Activated CD8-positive, alpha-beta T cell treated with anti-CD3 and anti-CD28 coated beads for 36 hours (primary cell): ENCODE measurements at regions of chr2 and their contacts with region 1.

Region 1: GRCh38 chr2:25606892-25607291 is 66.5 kb downstream of the DTNB start:
- DNase-seq: peak; percentile 15
- ATAC-seq: peak; percentile 60
- H3K4me3 Mint-ChIP-seq: no peak overlapping the region
- H3K27ac Mint-ChIP-seq: no peak overlapping the region
- H3K4me1 Mint-ChIP-seq: peaks cover 5% of the 10 kb centered on the region
- H3K27me3 Mint-ChIP-seq: no peaks in the 10 kb centered on the region
- CTCF ChIP-seq: peak; percentile 86

Region 2: DNA sequence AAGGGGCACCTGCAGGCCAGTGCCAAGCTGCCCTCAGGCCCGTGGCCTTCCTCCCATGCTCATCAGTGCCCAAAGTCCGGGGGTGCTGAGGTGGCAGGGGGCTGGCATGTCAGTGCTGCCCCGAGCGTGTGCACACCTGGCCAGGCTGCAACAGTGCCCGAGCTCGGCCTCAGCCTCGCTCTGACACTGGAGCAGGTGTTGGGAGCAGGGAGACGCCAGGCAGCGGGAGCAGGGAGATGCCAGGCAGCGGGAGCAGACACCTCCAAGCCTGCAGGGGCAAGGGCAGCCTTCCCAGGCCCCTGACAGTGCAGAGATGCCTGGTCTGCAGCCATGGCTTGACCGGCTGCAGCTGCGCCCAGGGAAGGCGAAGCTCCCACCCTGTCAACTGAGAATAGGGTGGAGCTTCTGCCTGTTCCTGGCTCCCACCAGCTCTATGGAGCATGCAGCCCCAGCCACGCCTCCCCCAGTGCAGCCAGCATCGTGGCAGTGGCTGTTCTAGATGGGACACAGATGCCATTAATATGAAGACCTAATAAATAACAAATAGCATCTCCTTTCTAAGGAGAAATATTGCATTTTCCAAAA is 15.9 kb before region 1 on chr2:
- CTCF ChIA-PET with region 1: interaction called, 17 read pairs
- POLR2A ChIA-PET with region 1: interaction called, 5 read pairs
- intact Hi-C with region 1: no loop called
- DNase-seq: no peak
- ATAC-seq: no peak
- H3K4me3 Mint-ChIP-seq: no peak overlapping the region
- H3K27ac Mint-ChIP-seq: no peak overlapping the region
- H3K4me1 Mint-ChIP-seq: peaks cover 26% of the 10 kb centered on the region
- H3K27me3 Mint-ChIP-seq: no peaks in the 10 kb centered on the region
- CTCF ChIP-seq: no peak

Region 3: DNA sequence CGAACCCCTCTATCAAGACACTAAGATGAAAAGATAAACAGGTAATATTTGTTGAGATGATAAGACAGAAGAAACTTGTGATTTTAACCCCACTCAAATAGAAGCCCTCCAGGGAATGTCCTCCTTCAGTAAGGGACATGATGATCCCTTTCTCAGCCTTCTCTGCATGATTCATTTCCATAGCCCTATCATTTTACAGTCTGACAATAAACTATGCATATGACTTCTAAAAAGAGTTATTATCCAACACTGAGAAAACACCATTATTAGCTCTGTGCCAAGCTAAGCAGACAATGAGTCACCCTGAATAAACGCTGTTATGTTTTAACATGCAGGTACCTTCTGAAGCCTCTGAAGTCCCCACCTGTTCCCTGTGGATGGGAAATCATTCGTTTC is 11.7 kb after region 1 on chr2:
- CTCF ChIA-PET with region 1: interaction called, 33 read pairs
- POLR2A ChIA-PET with region 1: no interaction called
- intact Hi-C with region 1: no loop called
- DNase-seq: no peak
- ATAC-seq: no peak
- H3K4me3 Mint-ChIP-seq: no peak overlapping the region
- H3K27ac Mint-ChIP-seq: no peak overlapping the region
- H3K4me1 Mint-ChIP-seq: peaks cover 2% of the 10 kb centered on the region
- H3K27me3 Mint-ChIP-seq: no peaks in the 10 kb centered on the region
- CTCF ChIP-seq: no peak

Region 4: GRCh38 chr2:25700221-25700660 is 93.3 kb after region 1 on chr2:
- CTCF ChIA-PET with region 1: interaction called, 109 read pairs
- POLR2A ChIA-PET with region 1: no interaction called
- intact Hi-C with region 1: no loop called
- DNase-seq: peak; percentile 52
- ATAC-seq: peak; percentile 81
- H3K4me3 Mint-ChIP-seq: no peak overlapping the region
- H3K27ac Mint-ChIP-seq: no peak overlapping the region
- H3K4me1 Mint-ChIP-seq: peaks cover 3% of the 10 kb centered on the region
- H3K27me3 Mint-ChIP-seq: no peaks in the 10 kb centered on the region
- CTCF ChIP-seq: peak; percentile 74

Region 5: GRCh38 chr2:25714740-25715139 is 107.8 kb after region 1 on chr2:
- CTCF ChIA-PET with region 1: interaction called, 18 read pairs
- POLR2A ChIA-PET with region 1: interaction called, 3 read pairs
- intact Hi-C with region 1: no loop called
- DNase-seq: no peak
- ATAC-seq: no peak
- H3K4me3 Mint-ChIP-seq: no peak overlapping the region
- H3K27ac Mint-ChIP-seq: no peak overlapping the region
- H3K4me1 Mint-ChIP-seq: peaks cover 12% of the 10 kb centered on the region
- H3K27me3 Mint-ChIP-seq: peaks cover 12% of the 10 kb centered on the region
- CTCF ChIP-seq: no peak

Region 6: DNA sequence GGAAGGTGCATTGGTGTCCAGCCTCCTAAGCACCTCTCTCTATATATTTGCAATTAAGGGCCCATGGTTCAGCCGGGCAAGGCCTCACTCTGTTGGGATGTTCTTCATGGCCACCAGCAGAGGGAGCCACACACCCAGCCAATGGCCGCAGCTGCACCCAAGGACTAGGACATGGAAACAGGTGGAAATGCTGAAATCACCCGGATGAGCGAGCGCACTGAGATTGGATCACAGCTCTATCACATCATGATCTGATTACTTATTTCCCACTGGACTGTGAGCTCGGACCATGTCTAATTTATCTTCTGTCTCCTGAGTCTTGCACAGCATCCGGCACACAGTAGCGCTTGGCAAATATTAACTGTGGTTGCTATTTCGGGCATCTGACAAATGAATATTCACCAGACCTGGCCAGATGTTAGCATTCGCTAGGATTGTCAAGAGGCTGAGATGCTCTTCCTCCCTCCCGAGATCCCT is 344.2 kb after region 1 on chr2:
- CTCF ChIA-PET with region 1: interaction called, 14 read pairs
- POLR2A ChIA-PET with region 1: no interaction called
- intact Hi-C with region 1: no loop called
- DNase-seq: peak; percentile 77
- ATAC-seq: peak; percentile 95
- H3K4me3 Mint-ChIP-seq: no peak overlapping the region
- H3K27ac Mint-ChIP-seq: no peak overlapping the region
- H3K4me1 Mint-ChIP-seq: no peaks in the 10 kb centered on the region
- H3K27me3 Mint-ChIP-seq: no peaks in the 10 kb centered on the region
- CTCF ChIP-seq: peak; percentile 87